ENCODE measurements at regions of chr14 and their contacts with region 1.

Region 1: DNA sequence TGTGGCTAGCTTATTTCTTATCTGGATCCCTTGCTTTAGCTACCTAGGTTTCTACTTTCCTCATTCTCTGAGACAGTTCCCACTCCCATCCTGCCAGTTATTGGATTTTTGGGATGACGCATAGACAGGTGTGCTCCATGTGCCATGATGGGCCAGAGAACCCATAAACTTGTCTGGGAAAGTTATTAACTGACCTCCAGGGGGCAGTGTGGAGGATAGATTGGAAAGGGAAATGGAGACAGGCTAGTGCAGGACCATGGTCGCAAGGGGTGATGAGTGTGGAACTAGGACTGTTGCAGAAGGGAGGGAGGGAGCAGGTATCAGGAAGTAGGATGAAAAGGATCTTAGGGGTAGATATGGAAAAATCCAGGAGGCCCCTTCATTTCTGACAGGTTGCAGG is 80.3 kb downstream of the ESRRB start:
- DNase-seq: peak; percentile 62
- H3K4me3 ChIP-seq: no peak overlapping the region; a peak in 1 of 4 replicates
- H3K27ac ChIP-seq: no peak overlapping the region
- H3K4me1 ChIP-seq: no peaks in the 10 kb centered on the region
- H3K27me3 ChIP-seq: no peaks in the 10 kb centered on the region
- CTCF ChIP-seq: peak; percentile 61
- EP300 ChIP-seq: no peak
- RAD21 ChIP-seq: peak; percentile 61

Region 2: GRCh38 chr14:76439237-76439775 is 16.9 kb before region 1 on chr14:
- CTCF ChIA-PET with region 1: interaction called, 10 read pairs
- POLR2A ChIA-PET with region 1: no interaction called
- DNase-seq: no peak
- H3K4me3 ChIP-seq: no peak overlapping the region
- H3K27ac ChIP-seq: no peak overlapping the region
- H3K4me1 ChIP-seq: no peaks in the 10 kb centered on the region
- H3K27me3 ChIP-seq: no peaks in the 10 kb centered on the region; the same call in 1 of the 2 replicates
- CTCF ChIP-seq: no peak
- EP300 ChIP-seq: no peak
- RAD21 ChIP-seq: no peak

Region 3: GRCh38 chr14:76467711-76468155 is 11.5 kb after region 1 on chr14:
- CTCF ChIA-PET with region 1: interaction called, 11 read pairs
- POLR2A ChIA-PET with region 1: no interaction called
- DNase-seq: no peak
- H3K4me3 ChIP-seq: no peak overlapping the region
- H3K27ac ChIP-seq: no peak overlapping the region
- H3K4me1 ChIP-seq: no peaks in the 10 kb centered on the region
- H3K27me3 ChIP-seq: 0 out of 2 replicates have a peak, but pooled peaks cover 7% of the 10 kb centered on the region
- CTCF ChIP-seq: no peak
- EP300 ChIP-seq: no peak
- RAD21 ChIP-seq: no peak

Region 4: GRCh38 chr14:76480421-76480820 is 24.2 kb after region 1 on chr14:
- CTCF ChIA-PET with region 1: interaction called, 10 read pairs
- POLR2A ChIA-PET with region 1: no interaction called
- DNase-seq: no peak
- H3K4me3 ChIP-seq: no peak overlapping the region
- H3K27ac ChIP-seq: no peak overlapping the region
- H3K4me1 ChIP-seq: peaks cover 0 to 6% of the 10 kb centered on the region in 2 experiments; a peak in 1 of 4 replicates
- H3K27me3 ChIP-seq: no peaks in the 10 kb centered on the region; the same call in 1 of the 2 replicates
- CTCF ChIP-seq: no peak
- EP300 ChIP-seq: no peak
- RAD21 ChIP-seq: no peak

Region 5: GRCh38 chr14:76497537-76498462 is 41.6 kb after region 1 on chr14:
- CTCF ChIA-PET with region 1: interaction called, 18 read pairs
- POLR2A ChIA-PET with region 1: no interaction called
- DNase-seq: peak; percentile 76
- H3K4me3 ChIP-seq: no peak overlapping the region; a peak in 1 of 4 replicates
- H3K27ac ChIP-seq: no peak overlapping the region
- H3K4me1 ChIP-seq: peaks cover 5 to 22% of the 10 kb centered on the region in 2 experiments; a peak in 2 of 4 replicates
- H3K27me3 ChIP-seq: no peaks in the 10 kb centered on the region
- CTCF ChIP-seq: no peak
- EP300 ChIP-seq: no peak
- RAD21 ChIP-seq: peak; percentile 73

Region 6: GRCh38 chr14:76647697-76648298 is 191.6 kb after region 1 on chr14:
- CTCF ChIA-PET with region 1: interaction called, 22 read pairs
- POLR2A ChIA-PET with region 1: no interaction called
- DNase-seq: peak; percentile 62
- H3K4me3 ChIP-seq: no peak overlapping the region
- H3K27ac ChIP-seq: no peak overlapping the region
- H3K4me1 ChIP-seq: peaks cover 0 to 9% of the 10 kb centered on the region in 2 experiments; a peak in 1 of 4 replicates
- H3K27me3 ChIP-seq: no peaks in the 10 kb centered on the region
- CTCF ChIP-seq: peak; percentile 83
- EP300 ChIP-seq: no peak
- RAD21 ChIP-seq: peak; percentile 78